ENCODE measurements at regions of chr11 and their contacts with region 1.

Region 1: GRCh38 chr11:123246749-123247495 is 51.9 kb upstream of the CLMP start:
- H3K4me3 Mint-ChIP-seq: no peak overlapping the region
- H3K27ac Mint-ChIP-seq: no peak overlapping the region
- H3K4me1 Mint-ChIP-seq: peaks cover 5% of the 10 kb centered on the region
- H3K27me3 Mint-ChIP-seq: peaks cover 12% of the 10 kb centered on the region

Region 2: GRCh38 chr11:123103326-123103980 is 143.5 kb before region 1 on chr11:
- intact Hi-C with region 1: loop called (anchors 2 kb)
- H3K4me3 Mint-ChIP-seq: no peak overlapping the region
- H3K27ac Mint-ChIP-seq: no peak overlapping the region
- H3K4me1 Mint-ChIP-seq: no peaks in the 10 kb centered on the region
- H3K27me3 Mint-ChIP-seq: peaks cover 10% of the 10 kb centered on the region

Region 3: GRCh38 chr11:123110356-123110755 is 136.6 kb before region 1 on chr11:
- intact Hi-C with region 1: loop called (anchors 1 kb)
- H3K4me3 Mint-ChIP-seq: no peak overlapping the region
- H3K27ac Mint-ChIP-seq: no peak overlapping the region
- H3K4me1 Mint-ChIP-seq: no peaks in the 10 kb centered on the region
- H3K27me3 Mint-ChIP-seq: peaks cover 12% of the 10 kb centered on the region

Region 4: DNA sequence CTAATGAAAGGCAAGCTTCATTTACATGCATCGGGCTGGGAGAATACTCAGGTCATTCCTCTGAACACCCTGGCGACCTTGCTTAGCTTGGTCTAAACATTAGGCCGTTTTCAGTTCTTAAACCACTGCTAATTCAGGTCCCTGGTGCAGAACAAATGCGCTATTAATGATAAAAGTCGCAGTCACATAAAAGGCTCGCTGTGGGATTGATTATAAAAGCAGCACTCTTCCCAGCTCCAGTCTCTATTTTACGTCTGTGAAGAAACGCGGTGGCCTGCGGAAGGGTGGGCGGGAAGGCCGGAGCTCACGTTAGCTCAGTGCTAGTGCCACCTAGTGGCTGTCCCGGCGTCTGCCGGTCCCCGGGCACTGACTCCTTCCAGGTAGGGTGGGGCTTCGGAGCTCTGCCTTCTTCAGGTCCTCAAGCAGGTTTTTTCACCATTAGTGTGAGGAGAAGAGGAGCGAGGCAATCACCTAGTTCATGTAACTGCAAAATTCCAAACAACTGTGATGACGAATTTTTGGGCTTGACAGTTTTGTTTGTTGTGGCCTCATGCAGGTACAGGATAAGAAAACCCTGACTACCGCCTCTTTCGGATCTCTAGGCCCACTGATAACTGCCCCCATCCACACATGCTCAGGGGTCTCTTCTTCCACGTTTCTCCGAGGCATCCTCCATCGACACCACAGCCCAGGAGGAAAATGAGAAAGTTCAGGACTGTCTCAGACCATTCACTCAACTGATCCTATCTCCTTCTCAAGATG is 14.6 kb after region 1 on chr11:
- intact Hi-C with region 1: no loop called
- H3K4me3 Mint-ChIP-seq: peak overlapping the region; percentile 34
- H3K27ac Mint-ChIP-seq: no peak overlapping the region
- H3K4me1 Mint-ChIP-seq: peaks cover 35% of the 10 kb centered on the region
- H3K27me3 Mint-ChIP-seq: peaks cover 12% of the 10 kb centered on the region

Region 5: GRCh38 chr11:123903932-123904331 is 657.0 kb after region 1 on chr11:
- intact Hi-C with region 1: no loop called
- H3K4me3 Mint-ChIP-seq: no peak overlapping the region
- H3K27ac Mint-ChIP-seq: no peak overlapping the region
- H3K4me1 Mint-ChIP-seq: no peaks in the 10 kb centered on the region
- H3K27me3 Mint-ChIP-seq: no peaks in the 10 kb centered on the region